ENCODE measurements at regions of chr12 and their contacts with region 1.

Region 1: GRCh38 chr12:44015335-44015941 is 179.6 kb downstream of the TMEM117 start:
- DNase-seq: no peak
- H3K4me3 Mint-ChIP-seq: no peak overlapping the region
- H3K27ac Mint-ChIP-seq: no peak overlapping the region
- H3K4me1 Mint-ChIP-seq: no peaks in the 10 kb centered on the region
- H3K27me3 Mint-ChIP-seq: no peaks in the 10 kb centered on the region

Region 2: DNA sequence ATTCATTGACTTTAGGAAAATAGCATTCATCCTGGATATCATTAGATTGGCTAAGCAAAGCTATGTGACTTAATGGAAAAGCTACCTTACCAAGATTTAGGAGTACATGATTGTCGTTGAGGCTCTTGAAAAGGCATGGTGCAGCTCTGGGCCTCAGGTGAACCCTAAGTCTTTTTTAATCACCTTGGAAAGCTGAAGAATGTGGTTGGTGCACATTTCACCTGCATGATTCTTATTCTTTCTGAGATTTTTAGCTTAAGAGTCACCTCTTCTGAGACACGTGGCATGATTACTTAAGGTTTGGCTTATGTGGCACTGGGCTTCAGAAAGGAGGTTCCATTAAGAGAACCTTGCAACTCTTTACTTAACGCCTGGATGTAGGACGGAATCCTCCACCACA is 318.9 kb after region 1 on chr12:
- CTCF ChIA-PET with region 1: no interaction called
- intact Hi-C with region 1: loop called (anchors 10 kb)
- DNase-seq: no peak
- H3K4me3 Mint-ChIP-seq: no peak overlapping the region
- H3K27ac Mint-ChIP-seq: no peak overlapping the region
- H3K4me1 Mint-ChIP-seq: no peaks in the 10 kb centered on the region
- H3K27me3 Mint-ChIP-seq: no peaks in the 10 kb centered on the region

Region 3: GRCh38 chr12:44774815-44775411 is 759.5 kb after region 1 on chr12:
- CTCF ChIA-PET with region 1: interaction called, 4 read pairs
- intact Hi-C with region 1: loop called (anchors 10 kb)
- DNase-seq: peak; percentile 75
- H3K4me3 Mint-ChIP-seq: no peak overlapping the region
- H3K27ac Mint-ChIP-seq: no peak overlapping the region
- H3K4me1 Mint-ChIP-seq: peaks cover 8% of the 10 kb centered on the region
- H3K27me3 Mint-ChIP-seq: no peaks in the 10 kb centered on the region

Region 4: GRCh38 chr12:44875954-44876553 is 860.6 kb after region 1 on chr12 and contains the start of gene NELL2:
- CTCF ChIA-PET with region 1: interaction called, 3 read pairs
- intact Hi-C with region 1: loop called (anchors 2 kb)
- DNase-seq: peak; percentile 82
- H3K4me3 Mint-ChIP-seq: peak within 1 kb of the TSS; percentile 99
- H3K27ac Mint-ChIP-seq: peak within 1 kb of the TSS; percentile 91
- H3K4me1 Mint-ChIP-seq: peaks cover 23% of the 10 kb centered on the region
- H3K27me3 Mint-ChIP-seq: peaks cover 6% of the 10 kb centered on the region
- total RNA-seq, gene NELL2: 61.9 to 72.2 TPM

Measured in activated naive CD4-positive, alpha-beta T cell treated with anti-CD3 and anti-CD28 coated beads for 36 hours (primary cell).